ENCODE measurements at regions of chr1 and their contacts with region 1.

Region 1: GRCh38 chr1:212355230-212355969 is 59.3 kb downstream of the PACC1 start:
- DNase-seq: no peak
- ATAC-seq: no peak
- H3K4me3 ChIP-seq: no peak overlapping the region
- H3K27ac ChIP-seq: no peak overlapping the region
- H3K4me1 ChIP-seq: no peaks in the 10 kb centered on the region
- H3K27me3 ChIP-seq: no peaks in the 10 kb centered on the region
- CTCF ChIP-seq: no peak

Region 2: GRCh38 chr1:211833174-211833820 is 522.1 kb before region 1 on chr1:
- CTCF ChIA-PET with region 1: no interaction called
- POLR2A ChIA-PET with region 1: no interaction called
- in situ Hi-C with region 1: no loop called
- intact Hi-C with region 1: no loop called
- DNase-seq: no peak
- ATAC-seq: no peak
- H3K4me3 ChIP-seq: no peak overlapping the region
- H3K27ac ChIP-seq: no peak overlapping the region
- H3K4me1 ChIP-seq: peaks cover 11% of the 10 kb centered on the region
- H3K27me3 ChIP-seq: no peaks in the 10 kb centered on the region
- CTCF ChIP-seq: no peak

Region 3: GRCh38 chr1:212147581-212148033 is 207.8 kb before region 1 on chr1:
- CTCF ChIA-PET with region 1: no interaction called
- POLR2A ChIA-PET with region 1: interaction called, 10 read pairs
- in situ Hi-C with region 1: no loop called
- intact Hi-C with region 1: no loop called
- DNase-seq: no peak
- ATAC-seq: no peak
- H3K4me3 ChIP-seq: no peak overlapping the region
- H3K27ac ChIP-seq: no peak overlapping the region
- H3K4me1 ChIP-seq: no peaks in the 10 kb centered on the region
- H3K27me3 ChIP-seq: no peaks in the 10 kb centered on the region
- CTCF ChIP-seq: no peak

Region 4: GRCh38 chr1:212432706-212433576 is 77.5 kb after region 1 on chr1 and contains the start of gene NENF:
- CTCF ChIA-PET with region 1: no interaction called
- POLR2A ChIA-PET with region 1: no interaction called
- in situ Hi-C with region 1: no loop called
- intact Hi-C with region 1: no loop called
- DNase-seq: no peak
- ATAC-seq: peak; percentile 100
- H3K4me3 ChIP-seq: peak within 1 kb of the TSS; percentile 72 to 80
- H3K27ac ChIP-seq: peak within 1 kb of the TSS; percentile 97
- H3K4me1 ChIP-seq: peaks cover 3% of the 10 kb centered on the region; the same call in 1 of the 2 replicates
- H3K27me3 ChIP-seq: no peaks in the 10 kb centered on the region
- CTCF ChIP-seq: no peak
- total RNA-seq, gene NENF: 72.4 TPM